ENCODE measurements at regions of chr3 and their contacts with region 1.

Region 1: GRCh38 chr3:129507181-129507831 is 21.1 kb upstream of the RHO start:
- DNase-seq: peak; percentile 52
- ATAC-seq: peak; percentile 68 to 84

Region 2: GRCh38 chr3:129461022-129461421 is 46.3 kb before region 1 on chr3:
- intact Hi-C with region 1: loop called in 1 of 2 experiments (anchors 5 kb)
- DNase-seq: no peak
- ATAC-seq: peak in 1 of 2 donors; percentile 13

Region 3: GRCh38 chr3:129543156-129543790 is 36.0 kb after region 1 on chr3 and contains the start of gene H1-8:
- intact Hi-C with region 1: loop called in 1 of 2 experiments (anchors 5 kb)
- DNase-seq: no peak
- ATAC-seq: no peak
- total RNA-seq, gene H1-8: not detected

Region 4: DNA sequence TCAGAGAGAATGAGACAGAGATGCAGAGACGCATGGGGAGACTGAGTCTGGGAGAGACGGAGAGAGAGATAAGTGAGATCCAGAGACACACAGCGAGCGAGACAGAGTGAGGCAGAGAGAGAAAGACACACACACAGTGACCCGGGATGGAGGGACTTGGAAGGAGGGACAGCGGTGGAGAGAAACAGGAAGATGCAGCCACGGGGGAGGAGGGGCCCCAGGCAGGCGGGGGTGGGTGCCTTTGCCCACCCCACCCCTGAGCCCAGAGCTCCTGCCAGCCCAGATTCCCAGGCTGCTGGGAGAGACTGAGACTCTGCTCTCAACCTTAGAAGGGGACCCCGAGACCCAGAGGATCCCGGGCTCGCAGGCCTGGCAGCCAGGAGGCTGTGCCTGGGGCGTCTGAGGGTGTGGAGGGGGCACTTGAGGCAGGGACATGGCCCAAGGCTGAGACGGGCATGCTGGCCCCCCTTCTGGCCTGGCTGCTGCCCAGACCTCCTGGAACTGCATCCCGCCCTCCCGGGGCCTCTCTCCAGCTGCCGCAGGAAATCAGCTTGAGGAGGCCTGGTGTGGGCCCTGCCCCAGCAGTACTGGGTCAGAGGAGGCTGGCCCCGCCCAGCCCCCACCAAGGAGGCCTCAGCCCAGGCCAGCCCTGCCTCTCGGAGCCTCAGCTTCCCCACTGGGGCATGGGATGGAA is 53.7 kb after region 1 on chr3:
- intact Hi-C with region 1: loop called in 1 of 2 experiments (anchors 5 kb)
- DNase-seq: peak; percentile 90
- ATAC-seq: peak; percentile 79 to 83